A673 (cell line): ENCODE measurements at regions of chr19 and their contacts with region 1.

Region 1: GRCh38 chr19:30406220-30407067 is 34.3 kb downstream of the ZNF536 start:
- DNase-seq: peak; percentile 12
- H3K4me3 ChIP-seq: no peak overlapping the region
- H3K27ac ChIP-seq: no peak overlapping the region
- H3K4me1 ChIP-seq: no peaks in the 10 kb centered on the region
- H3K27me3 ChIP-seq: peaks cover 5% of the 10 kb centered on the region
- CTCF ChIP-seq: peak; percentile 45

Region 2: GRCh38 chr19:30227661-30228428 is 178.6 kb before region 1 on chr19:
- CTCF ChIA-PET with region 1: no interaction called
- POLR2A ChIA-PET with region 1: no interaction called
- intact Hi-C with region 1: loop called (anchors 5 kb)
- DNase-seq: peak; percentile 78
- H3K4me3 ChIP-seq: peak overlapping the region; percentile 63
- H3K27ac ChIP-seq: peak overlapping the region; percentile 10
- H3K4me1 ChIP-seq: peaks cover 18% of the 10 kb centered on the region
- H3K27me3 ChIP-seq: peaks cover 52% of the 10 kb centered on the region
- CTCF ChIP-seq: peak; percentile 58